Activated T-helper 2 cell treated with anti-CD3 and anti-CD28 coated beads, Interferon-gamma antibody, Interleukin-2, Interleukin-4, amounts not matched to agents 10 μg/mL and 5 μg/mL and 100 μg/mL, durations not matched to agents 14 hours and 24 hours and 36 hours (primary cell): ENCODE measurements at regions of chr5 and their contacts with region 1.

Region 1: GRCh38 chr5:134370871-134371833 is at the start of gene UBE2B:
- DNase-seq: peak; percentile 94
- H3K4me3 Mint-ChIP-seq: peak within 1 kb of the TSS; percentile 95
- H3K27ac Mint-ChIP-seq: peak within 1 kb of the TSS; percentile 96
- H3K4me1 Mint-ChIP-seq: peaks cover 44% of the 10 kb centered on the region
- H3K27me3 Mint-ChIP-seq: no peaks in the 10 kb centered on the region
- total RNA-seq, gene UBE2B: 97.2 and 97.5 TPM in 2 replicates

Region 2: GRCh38 chr5:134176511-134177368 is 194.4 kb before region 1 on chr5 and contains the start of gene SKP1:
- intact Hi-C with region 1: loop called (anchors 5 kb)
- DNase-seq: peak; percentile 85
- H3K4me3 Mint-ChIP-seq: peak within 1 kb of the TSS; percentile 97
- H3K27ac Mint-ChIP-seq: peak within 1 kb of the TSS; percentile 98
- H3K4me1 Mint-ChIP-seq: peaks cover 23% of the 10 kb centered on the region
- H3K27me3 Mint-ChIP-seq: peaks cover 8% of the 10 kb centered on the region
- total RNA-seq, gene SKP1: 254 and 257 TPM in 2 replicates

Region 3: GRCh38 chr5:134411546-134412266 is 40.6 kb after region 1 on chr5 and contains the start of gene CDKN2AIPNL:
- intact Hi-C with region 1: loop called (anchors 1 kb)
- DNase-seq: peak; percentile 86
- H3K4me3 Mint-ChIP-seq: peak within 1 kb of the TSS; percentile 92
- H3K27ac Mint-ChIP-seq: peak within 1 kb of the TSS; percentile 80
- H3K4me1 Mint-ChIP-seq: peaks cover 25% of the 10 kb centered on the region
- H3K27me3 Mint-ChIP-seq: no peaks in the 10 kb centered on the region
- total RNA-seq, gene CDKN2AIPNL: 34.5 and 37.8 TPM in 2 replicates

Region 4: GRCh38 chr5:134503088-134503946 is 132.2 kb after region 1 on chr5:
- intact Hi-C with region 1: loop called (anchors 1 kb)
- DNase-seq: peak; percentile 67
- H3K4me3 Mint-ChIP-seq: peak overlapping the region; percentile 64
- H3K27ac Mint-ChIP-seq: peak overlapping the region; percentile 99
- H3K4me1 Mint-ChIP-seq: peaks cover 40% of the 10 kb centered on the region
- H3K27me3 Mint-ChIP-seq: no peaks in the 10 kb centered on the region

Region 5: DNA sequence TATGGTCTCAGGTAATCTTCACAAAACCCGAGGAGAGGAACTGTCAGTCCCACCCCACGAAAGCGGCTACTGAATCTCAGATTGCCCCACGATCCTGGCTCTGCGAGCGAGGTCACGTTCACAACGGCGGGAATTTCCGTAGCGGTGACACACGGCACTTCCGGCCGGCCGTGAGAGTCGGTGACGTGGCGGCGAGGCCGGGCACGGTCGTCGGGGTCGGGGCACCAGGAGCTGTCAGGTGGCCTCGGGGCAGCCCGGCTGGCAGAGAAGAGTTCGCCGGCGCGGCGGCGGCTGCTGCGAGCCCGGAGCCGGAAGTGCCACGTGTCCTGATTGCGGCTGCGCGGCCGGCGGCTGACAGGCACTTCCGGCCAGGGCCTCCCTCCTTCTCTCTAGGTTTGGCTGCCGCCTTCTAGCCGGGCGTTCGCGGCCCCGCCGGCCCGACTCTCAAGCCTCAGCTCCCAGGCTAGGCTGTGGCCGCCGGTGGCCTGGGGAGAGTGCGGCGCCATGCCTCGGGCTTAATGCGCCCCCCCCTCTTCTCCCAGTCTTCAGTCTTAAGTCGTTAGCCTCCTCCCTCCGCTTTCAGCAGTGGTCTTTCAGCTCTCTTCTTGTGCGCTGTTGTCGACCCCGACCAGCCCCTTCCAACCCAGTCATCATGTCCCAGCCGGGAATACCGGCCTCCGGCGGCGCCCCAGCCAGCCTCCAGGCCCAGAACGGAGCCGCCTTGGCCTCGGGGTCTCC is 277.4 kb after region 1 on chr5 and contains the start of gene SEC24A:
- intact Hi-C with region 1: loop called (anchors 2 kb)
- DNase-seq: peak; percentile 88
- H3K4me3 Mint-ChIP-seq: peak within 1 kb of the TSS; percentile 88
- H3K27ac Mint-ChIP-seq: peak within 1 kb of the TSS; percentile 97
- H3K4me1 Mint-ChIP-seq: peaks cover 22% of the 10 kb centered on the region
- H3K27me3 Mint-ChIP-seq: no peaks in the 10 kb centered on the region
- total RNA-seq, gene SEC24A: 33.9 and 34.0 TPM in 2 replicates

Region 6: GRCh38 chr5:134904630-134905245 is 533.6 kb after region 1 on chr5 and contains the start of gene PCBD2:
- intact Hi-C with region 1: loop called (anchors 10 kb)
- DNase-seq: peak; percentile 92
- H3K4me3 Mint-ChIP-seq: peak within 1 kb of the TSS; percentile 94
- H3K27ac Mint-ChIP-seq: peak within 1 kb of the TSS; percentile 99
- H3K4me1 Mint-ChIP-seq: peaks cover 16% of the 10 kb centered on the region
- H3K27me3 Mint-ChIP-seq: no peaks in the 10 kb centered on the region
- total RNA-seq, gene PCBD2: 13.3 and 14.1 TPM in 2 replicates